ENCODE measurements at regions of chr16 and their contacts with region 1.

Region 1: GRCh38 chr16:54766355-54766754 is 164.3 kb upstream of the IRX5 start:
- DNase-seq: no peak
- H3K4me3 ChIP-seq: no peak overlapping the region
- H3K27ac ChIP-seq: no peak overlapping the region
- H3K4me1 ChIP-seq: no peaks in the 10 kb centered on the region
- H3K27me3 ChIP-seq: peaks cover 4% of the 10 kb centered on the region; the same call in 1 of the 2 replicates
- CTCF ChIP-seq: no peak

Region 2: GRCh38 chr16:54873071-54873470 is 106.7 kb after region 1 on chr16:
- CTCF ChIA-PET with region 1: no interaction called
- POLR2A ChIA-PET with region 1: interaction called, 23 read pairs
- intact Hi-C with region 1: no loop called
- DNase-seq: no peak
- H3K4me3 ChIP-seq: no peak overlapping the region
- H3K27ac ChIP-seq: no peak overlapping the region
- H3K4me1 ChIP-seq: no peaks in the 10 kb centered on the region
- H3K27me3 ChIP-seq: no peaks in the 10 kb centered on the region
- CTCF ChIP-seq: no peak

Measured in PC-9 (cell line).